Naive thymus-derived CD4-positive, alpha-beta T cell (primary cell): ENCODE measurements at regions of chr7 and their contacts with region 1.

Region 1: DNA sequence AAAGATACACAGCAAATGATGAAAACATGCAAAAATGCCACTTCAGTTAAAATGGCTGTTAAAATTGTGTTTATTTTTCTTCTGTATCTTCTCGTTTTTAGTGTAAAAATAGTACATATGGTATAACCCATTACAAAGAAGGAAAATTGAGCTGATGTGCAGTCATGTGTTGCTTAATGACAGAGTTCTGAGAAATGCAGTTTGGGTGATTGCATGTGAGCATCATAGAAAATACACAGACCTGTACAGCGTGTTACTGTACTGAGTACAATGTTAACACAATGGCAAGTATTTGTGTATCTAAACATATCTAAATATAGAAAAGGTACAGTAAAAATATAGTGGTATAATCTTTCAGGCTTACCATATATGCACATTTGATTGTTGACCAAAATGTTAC is 7.3 kb downstream of the DMTF1 start:
- DNase-seq: no peak
- ATAC-seq: no peak
- H3K4me3 ChIP-seq: no peak overlapping the region
- H3K4me3 Mint-ChIP-seq: no peak overlapping the region
- H3K27ac ChIP-seq: no peak overlapping the region
- H3K27ac Mint-ChIP-seq: no peak overlapping the region
- H3K4me1 ChIP-seq: peaks cover 22 to 26% of the 10 kb centered on the region in 2 donors
- H3K4me1 Mint-ChIP-seq: peaks cover 29 to 78% (median 70%) of the 10 kb centered on the region in 7 donors
- H3K27me3 ChIP-seq: no peaks in the 10 kb centered on the region
- H3K27me3 Mint-ChIP-seq: no peaks in the 10 kb centered on the region

Region 2: DNA sequence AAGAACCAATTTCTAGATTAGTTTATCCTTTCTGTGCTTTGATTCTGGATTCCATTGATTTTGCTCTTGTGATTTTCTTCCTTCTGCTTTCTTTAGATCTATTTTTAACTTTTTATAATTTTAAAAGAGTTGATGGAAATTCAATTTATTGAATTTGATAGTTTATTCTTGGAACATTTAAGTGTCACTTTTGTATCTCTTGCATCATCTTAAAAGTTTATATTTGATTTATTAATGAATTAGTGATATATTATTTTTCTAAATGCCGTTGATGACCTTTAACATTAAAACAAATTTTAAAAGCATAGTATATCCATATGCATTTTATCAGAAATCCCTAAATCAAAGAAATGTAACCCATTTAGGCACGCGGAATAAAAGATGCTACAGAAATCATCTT is 19.6 kb after region 1 on chr7:
- CTCF ChIA-PET with region 1: no interaction called
- POLR2A ChIA-PET with region 1: interaction called, 7 read pairs
- intact Hi-C with region 1: loop called in 1 of 2 experiments (anchors 2 kb)
- DNase-seq: no peak
- ATAC-seq: no peak
- H3K4me3 ChIP-seq: no peak overlapping the region
- H3K4me3 Mint-ChIP-seq: no peak overlapping the region
- H3K27ac ChIP-seq: no peak overlapping the region
- H3K27ac Mint-ChIP-seq: peak overlapping the region in 4 of 9 donors; percentile 22 to 72 (median 48)
- H3K4me1 ChIP-seq: no peaks in the 10 kb centered on the region
- H3K4me1 Mint-ChIP-seq: peaks cover 9 to 54% (median 39%) of the 10 kb centered on the region in 7 donors
- H3K27me3 ChIP-seq: no peaks in the 10 kb centered on the region
- H3K27me3 Mint-ChIP-seq: no peaks in the 10 kb centered on the region

Region 3: DNA sequence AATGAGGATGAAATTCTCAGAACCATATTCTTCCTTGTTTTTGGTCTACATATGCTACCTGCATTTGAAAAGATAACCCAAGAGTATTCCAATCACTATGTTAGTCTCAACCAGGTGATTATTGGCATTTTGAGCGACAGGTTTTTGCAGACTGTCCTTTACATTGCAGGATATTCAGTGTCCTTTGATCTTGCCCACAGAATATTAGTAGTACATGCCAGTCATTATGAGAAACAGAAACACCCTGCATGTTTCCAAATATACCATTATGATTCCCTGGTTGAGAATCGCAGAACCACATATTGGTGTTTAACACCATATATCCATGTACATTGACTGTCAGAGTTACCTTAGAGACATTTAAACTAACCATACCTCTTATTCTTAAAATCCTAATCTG is 29.4 kb after region 1 on chr7:
- CTCF ChIA-PET with region 1: no interaction called
- POLR2A ChIA-PET with region 1: interaction called, 4 read pairs
- intact Hi-C with region 1: loop called (anchors 2 to 5 kb)
- DNase-seq: no peak
- ATAC-seq: no peak
- H3K4me3 ChIP-seq: no peak overlapping the region
- H3K4me3 Mint-ChIP-seq: no peak overlapping the region
- H3K27ac ChIP-seq: no peak overlapping the region
- H3K27ac Mint-ChIP-seq: peak overlapping the region in 5 of 9 donors; percentile 7 to 69 (median 26)
- H3K4me1 ChIP-seq: no peaks in the 10 kb centered on the region
- H3K4me1 Mint-ChIP-seq: peaks cover 2 to 54% (median 30%) of the 10 kb centered on the region in 7 donors
- H3K27me3 ChIP-seq: no peaks in the 10 kb centered on the region
- H3K27me3 Mint-ChIP-seq: no peaks in the 10 kb centered on the region